IMR-90 (cell line): ENCODE measurements at regions of chr15 and their contacts with region 1.

Region 1: DNA sequence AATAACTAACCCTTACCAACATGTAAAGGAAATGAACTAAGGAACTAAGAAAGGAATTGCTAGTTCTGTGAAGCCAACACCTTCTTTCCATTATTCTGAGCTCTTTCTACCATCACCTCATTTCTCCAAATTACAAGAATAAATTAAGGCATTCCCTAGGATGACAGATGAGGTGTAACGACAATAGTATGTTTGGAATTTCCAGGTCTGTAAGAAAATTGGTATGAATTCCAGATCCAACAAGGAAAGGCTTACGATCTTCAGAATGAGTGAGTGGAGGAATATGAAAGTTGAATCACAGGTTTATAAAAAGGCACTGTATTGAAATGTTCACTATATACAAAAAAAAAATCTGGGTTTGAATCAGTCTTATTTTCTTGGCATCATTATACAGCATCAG is 4.5 kb upstream of the NANOGP8 start:
- DNase-seq: peak; percentile 23
- ATAC-seq: peak; percentile 42
- H3K4me3 ChIP-seq: no peak overlapping the region
- H3K27ac ChIP-seq: no peak overlapping the region
- H3K4me1 ChIP-seq: no peaks in the 10 kb centered on the region; the same call in 1 of the 2 replicates
- H3K27me3 ChIP-seq: no peaks in the 10 kb centered on the region
- CTCF ChIP-seq: no peak
- POLR2A ChIP-seq: no peak
- RAD21 ChIP-seq: no peak

Region 2: DNA sequence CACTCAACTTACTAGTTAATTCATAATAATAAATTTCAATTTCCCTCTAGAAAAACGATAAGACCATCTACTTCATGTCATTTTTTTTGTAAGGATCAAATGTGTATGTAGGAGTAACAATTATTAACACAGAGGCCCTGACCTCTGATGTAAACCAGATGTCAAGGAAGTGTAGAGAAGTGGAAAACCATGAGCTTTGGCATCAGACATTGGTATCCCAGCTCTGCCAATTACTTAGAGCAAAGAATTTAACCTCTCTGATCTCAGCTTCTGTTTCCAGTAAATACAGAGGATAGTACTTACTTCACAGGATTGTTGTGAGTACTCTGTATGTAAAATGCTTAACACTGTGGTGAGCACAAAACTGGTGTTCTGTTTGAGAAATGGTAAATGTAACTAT is 137.6 kb before region 1 on chr15:
- CTCF ChIA-PET with region 1: no interaction called
- POLR2A ChIA-PET with region 1: no interaction called
- dilution Hi-C with region 1: no loop called
- in situ Hi-C with region 1: no loop called
- intact Hi-C with region 1: no loop called
- DNase-seq: no peak
- ATAC-seq: peak; percentile 54
- H3K4me3 ChIP-seq: no peak overlapping the region
- H3K27ac ChIP-seq: no peak overlapping the region
- H3K4me1 ChIP-seq: no peaks in the 10 kb centered on the region
- H3K27me3 ChIP-seq: no peaks in the 10 kb centered on the region
- CTCF ChIP-seq: no peak
- POLR2A ChIP-seq: no peak
- RAD21 ChIP-seq: no peak

Region 3: DNA sequence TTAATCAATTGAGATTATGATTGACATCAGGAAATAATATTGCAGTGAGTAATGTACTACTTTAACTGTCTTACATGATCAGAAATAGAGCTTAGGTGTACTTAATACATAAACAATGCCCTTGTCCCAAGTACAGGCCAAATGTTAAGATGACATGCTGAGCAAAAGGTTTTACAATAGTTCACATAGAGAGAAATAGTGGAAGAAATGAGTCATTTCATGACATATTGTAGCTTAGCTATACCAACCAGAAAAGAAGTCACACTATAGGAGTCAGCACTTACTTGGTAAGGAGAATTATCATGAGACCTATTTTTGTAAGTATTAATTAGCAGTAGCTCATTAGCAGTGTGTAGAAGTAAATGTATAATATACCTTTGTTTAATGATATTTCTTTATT is 92.0 kb after region 1 on chr15:
- CTCF ChIA-PET with region 1: no interaction called
- POLR2A ChIA-PET with region 1: no interaction called
- dilution Hi-C with region 1: no loop called
- in situ Hi-C with region 1: no loop called
- intact Hi-C with region 1: loop called (anchors 5 kb)
- DNase-seq: peak; percentile 63
- ATAC-seq: peak; percentile 32; the same call in 1 of the 2 replicates
- H3K4me3 ChIP-seq: no peak overlapping the region
- H3K27ac ChIP-seq: no peak overlapping the region
- H3K4me1 ChIP-seq: peaks cover 2% of the 10 kb centered on the region
- H3K27me3 ChIP-seq: no peaks in the 10 kb centered on the region
- CTCF ChIP-seq: no peak
- POLR2A ChIP-seq: no peak
- RAD21 ChIP-seq: no peak